ENCODE measurements at regions of chr5 and their contacts with region 1.

Region 1: DNA sequence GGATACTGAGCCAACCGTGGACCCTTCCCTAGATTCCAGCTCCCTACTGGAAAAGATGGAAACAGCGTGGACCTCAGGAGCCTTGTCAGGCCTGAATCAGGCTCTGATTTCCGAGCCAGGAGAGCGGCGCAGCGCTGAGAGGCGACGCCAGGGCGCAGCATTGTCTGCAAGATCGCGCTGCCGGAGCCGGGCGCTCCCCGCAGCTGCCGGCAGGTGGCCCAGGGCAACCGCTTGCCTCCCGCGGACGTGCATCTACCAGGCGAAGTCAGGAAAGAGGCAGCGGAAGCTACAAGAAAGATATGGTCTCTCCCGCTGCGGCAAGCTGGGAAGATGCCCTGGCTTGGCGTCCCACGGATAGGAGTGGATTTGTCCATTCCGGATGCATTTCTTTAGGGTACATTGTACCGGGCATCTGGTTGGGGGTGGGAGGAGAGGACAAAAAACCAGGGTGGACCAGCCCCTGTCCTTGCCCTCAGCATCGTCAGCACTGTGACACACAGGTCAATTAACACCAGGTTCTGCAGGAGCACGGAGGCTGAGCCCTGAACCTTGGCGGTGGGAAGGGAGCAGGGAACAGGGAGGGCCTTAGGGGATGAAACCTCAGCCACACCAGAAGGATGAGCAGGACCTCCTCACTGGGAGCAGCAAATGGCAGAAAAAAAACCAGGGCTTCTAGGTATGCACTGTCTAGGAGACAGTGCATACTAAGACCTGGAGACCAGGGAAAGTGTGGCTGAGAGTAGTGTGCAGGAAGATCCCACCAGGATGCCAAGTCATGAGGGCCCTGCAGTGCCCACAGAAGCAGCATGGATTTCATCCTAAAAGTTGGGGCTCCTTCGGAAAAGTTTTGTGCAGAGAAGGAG is 55.9 kb downstream of the SFXN1 start:
- DNase-seq: peak; percentile 91
- H3K4me3 Mint-ChIP-seq: peak overlapping the region; percentile 52
- H3K27ac Mint-ChIP-seq: peak overlapping the region; percentile 56
- H3K4me1 Mint-ChIP-seq: peaks cover 44% of the 10 kb centered on the region
- H3K27me3 Mint-ChIP-seq: no peaks in the 10 kb centered on the region

Region 2: GRCh38 chr5:175406300-175406699 is 128.0 kb before region 1 on chr5:
- CTCF ChIA-PET with region 1: no interaction called
- POLR2A ChIA-PET with region 1: no interaction called
- intact Hi-C with region 1: no loop called
- DNase-seq: no peak
- H3K4me3 Mint-ChIP-seq: no peak overlapping the region
- H3K27ac Mint-ChIP-seq: no peak overlapping the region
- H3K4me1 Mint-ChIP-seq: no peaks in the 10 kb centered on the region
- H3K27me3 Mint-ChIP-seq: peaks cover 1% of the 10 kb centered on the region

Region 3: DNA sequence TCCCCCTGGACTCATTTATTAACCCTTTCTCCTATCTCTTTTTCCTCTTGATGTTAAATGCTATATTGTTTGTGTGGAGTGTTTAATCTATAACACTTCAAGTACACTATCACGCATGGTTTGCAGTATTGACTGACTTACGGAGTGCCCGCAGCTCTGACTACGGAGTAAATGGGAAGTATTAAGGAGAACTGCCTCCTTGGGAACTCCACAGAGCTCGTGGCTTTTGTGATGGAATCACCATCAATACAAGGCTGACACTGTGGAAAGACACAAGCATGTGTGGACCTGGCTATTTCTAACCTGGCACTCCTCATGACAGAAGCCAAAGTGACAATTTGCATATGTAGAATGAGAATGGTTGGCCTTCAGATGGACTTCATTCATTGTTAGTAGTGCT is 10.3 kb after region 1 on chr5:
- CTCF ChIA-PET with region 1: interaction called, 10 read pairs
- POLR2A ChIA-PET with region 1: no interaction called
- intact Hi-C with region 1: no loop called
- DNase-seq: no peak
- H3K4me3 Mint-ChIP-seq: no peak overlapping the region
- H3K27ac Mint-ChIP-seq: no peak overlapping the region
- H3K4me1 Mint-ChIP-seq: peaks cover 16% of the 10 kb centered on the region
- H3K27me3 Mint-ChIP-seq: peaks cover 14% of the 10 kb centered on the region

Region 4: DNA sequence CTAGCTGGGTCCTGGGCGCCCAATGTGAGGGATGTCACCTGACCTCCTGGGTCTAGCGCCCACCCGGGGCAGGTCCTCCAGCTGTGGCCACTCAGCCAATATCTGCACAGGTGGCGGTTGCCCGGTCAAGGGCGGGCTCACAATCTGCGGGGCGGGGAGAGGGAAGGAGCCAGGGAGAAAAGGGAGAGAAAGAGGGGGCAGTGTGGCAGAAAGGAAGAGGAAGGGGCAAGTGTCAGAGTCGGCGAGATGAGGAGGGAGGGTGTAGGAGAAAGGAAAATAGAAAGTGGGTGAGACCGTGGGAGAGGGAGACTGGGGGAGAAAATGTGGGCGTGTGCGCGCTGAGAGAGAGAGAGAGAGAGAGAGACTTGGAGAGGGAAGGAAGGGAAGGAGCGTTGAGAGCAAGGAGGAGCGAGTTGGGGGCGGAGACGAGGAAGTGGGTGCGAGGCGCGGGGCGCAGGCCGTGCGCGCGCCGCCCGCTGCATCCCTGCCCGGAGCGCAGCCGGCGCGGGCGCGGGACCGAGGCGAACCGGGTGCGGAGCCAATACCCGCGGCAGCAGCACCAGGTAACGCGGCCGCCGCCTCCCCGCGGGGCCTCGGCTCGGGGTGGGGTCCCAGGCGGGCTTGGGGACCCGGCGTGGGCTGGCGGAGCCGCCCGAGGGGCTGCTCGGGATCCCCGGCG is 123.4 kb after region 1 on chr5 and contains the start of gene HRH2:
- CTCF ChIA-PET with region 1: interaction called, 46 read pairs
- POLR2A ChIA-PET with region 1: interaction called, 3 read pairs
- intact Hi-C with region 1: no loop called
- DNase-seq: peak; percentile 72
- H3K4me3 Mint-ChIP-seq: peak within 1 kb of the TSS; percentile 87
- H3K27ac Mint-ChIP-seq: peak within 1 kb of the TSS; percentile 75
- H3K4me1 Mint-ChIP-seq: peaks cover 77% of the 10 kb centered on the region
- H3K27me3 Mint-ChIP-seq: no peaks in the 10 kb centered on the region
- total RNA-seq, gene HRH2: 11.6 to 11.8 TPM

Region 5: DNA sequence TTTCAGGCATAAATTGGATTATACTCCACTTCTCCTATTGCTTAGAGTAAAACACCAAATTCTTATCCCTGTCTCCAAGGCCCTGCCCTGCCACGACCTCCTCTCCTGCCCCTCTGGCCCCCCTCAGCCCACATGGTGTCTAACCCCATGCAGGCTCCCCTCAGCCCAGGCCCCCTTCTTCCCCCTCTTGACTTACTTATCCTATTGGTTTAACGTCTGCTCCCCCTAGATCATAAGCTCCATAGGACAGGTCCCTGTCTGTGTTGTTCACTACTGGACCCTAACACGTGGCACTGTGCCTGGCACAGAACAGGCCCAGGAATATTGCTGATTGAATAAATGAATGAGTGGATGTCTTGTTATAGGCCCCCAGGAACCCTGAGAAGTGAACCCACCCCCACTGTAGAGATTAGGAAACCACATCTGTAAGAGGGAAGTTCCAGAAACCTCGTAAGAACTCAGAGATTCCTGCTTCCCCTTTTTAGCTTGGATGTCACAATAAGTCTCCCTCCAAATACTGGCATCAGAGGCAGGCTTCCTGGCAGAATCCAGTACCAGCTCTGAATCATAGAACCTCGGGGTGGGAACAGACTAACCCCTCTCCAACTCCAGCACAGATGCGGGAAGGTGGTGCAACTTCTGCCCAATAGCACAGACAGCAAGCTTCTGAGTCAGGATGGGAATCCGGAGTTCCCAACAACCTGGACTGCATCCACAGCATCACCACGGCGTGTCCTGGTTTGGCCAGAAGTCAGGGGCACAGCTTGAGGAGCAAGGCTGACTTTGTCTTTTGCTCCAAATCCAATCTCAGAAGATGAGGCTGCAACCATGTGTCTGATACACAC is 155.1 kb after region 1 on chr5:
- CTCF ChIA-PET with region 1: interaction called, 273 read pairs
- POLR2A ChIA-PET with region 1: interaction called, 3 read pairs
- intact Hi-C with region 1: no loop called
- DNase-seq: no peak
- H3K4me3 Mint-ChIP-seq: no peak overlapping the region
- H3K27ac Mint-ChIP-seq: no peak overlapping the region
- H3K4me1 Mint-ChIP-seq: peaks cover 5% of the 10 kb centered on the region
- H3K27me3 Mint-ChIP-seq: no peaks in the 10 kb centered on the region

Region 6: DNA sequence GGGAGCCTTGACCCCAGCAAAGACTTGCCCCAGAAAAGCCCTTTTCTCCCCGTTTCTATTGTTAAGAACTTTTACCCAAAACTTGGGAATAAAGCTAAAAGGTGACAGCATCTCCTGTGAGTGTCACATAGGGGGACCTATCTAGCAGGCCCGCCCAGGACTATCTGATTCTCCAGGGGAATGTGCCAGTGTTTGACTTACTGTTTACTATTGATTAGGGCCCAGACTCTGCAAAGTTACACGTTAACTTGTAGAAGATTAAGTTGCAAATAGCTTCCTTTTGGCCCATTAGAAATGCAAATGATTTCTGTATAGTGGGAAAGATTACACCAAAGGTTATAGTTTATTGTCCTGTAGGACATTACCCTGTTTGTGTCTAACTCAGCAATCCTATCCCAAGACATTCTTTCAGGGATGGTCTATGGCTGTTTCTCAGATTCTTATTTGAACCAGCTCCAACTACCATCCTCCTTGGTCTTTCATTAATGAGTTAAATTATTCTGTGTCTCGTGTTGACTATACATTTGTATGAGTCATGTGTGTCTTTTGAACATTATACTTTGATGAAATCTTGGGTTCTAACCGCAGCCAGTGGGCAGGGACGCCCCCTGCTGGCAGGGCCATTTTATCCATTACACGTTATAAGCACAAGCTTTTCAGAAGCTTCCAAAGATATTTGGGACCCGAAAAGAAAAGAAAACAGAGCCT is 184.3 kb after region 1 on chr5:
- CTCF ChIA-PET with region 1: interaction called, 179 read pairs
- POLR2A ChIA-PET with region 1: interaction called, 3 read pairs
- intact Hi-C with region 1: loop called (anchors 2 kb)
- DNase-seq: peak; percentile 84
- H3K4me3 Mint-ChIP-seq: no peak overlapping the region
- H3K27ac Mint-ChIP-seq: no peak overlapping the region
- H3K4me1 Mint-ChIP-seq: peaks cover 4% of the 10 kb centered on the region
- H3K27me3 Mint-ChIP-seq: no peaks in the 10 kb centered on the region

Measured in activated CD4-positive, alpha-beta memory T cell treated with anti-CD3 and anti-CD28 coated beads for 36 hours (primary cell).